ENCODE measurements at regions of chr2 and their contacts with region 1.

Region 1: GRCh38 chr2:217643789-217644301 is 358.9 kb downstream of the TNS1 start:
- DNase-seq: no peak
- H3K4me3 ChIP-seq: no peak overlapping the region
- H3K27ac ChIP-seq: peak overlapping the region in 1 of 2 donors; percentile 61
- H3K4me1 ChIP-seq: no peaks in the 10 kb centered on the region
- H3K27me3 ChIP-seq: no peaks in the 10 kb centered on the region
- CTCF ChIP-seq: no peak
- POLR2A ChIP-seq: no peak

Region 2: GRCh38 chr2:217434181-217434975 is 209.5 kb before region 1 on chr2:
- intact Hi-C with region 1: loop called (anchors 10 kb)
- DNase-seq: peak; percentile 85
- H3K4me3 ChIP-seq: no peak overlapping the region
- H3K27ac ChIP-seq: peak overlapping the region; percentile 16 to 49
- H3K4me1 ChIP-seq: no peaks in the 10 kb centered on the region
- H3K27me3 ChIP-seq: no peaks in the 10 kb centered on the region
- CTCF ChIP-seq: no peak
- POLR2A ChIP-seq: peak; percentile 8